ENCODE measurements at regions of chr7 and their contacts with region 1.

Region 1: GRCh38 chr7:7968543-7969305 is at the start of gene GLCCI1:
- DNase-seq: peak; percentile 93
- ATAC-seq: peak; percentile 89
- H3K4me3 Mint-ChIP-seq: peak within 1 kb of the TSS; percentile 92
- H3K27ac Mint-ChIP-seq: peak within 1 kb of the TSS; percentile 96
- H3K4me1 Mint-ChIP-seq: peaks cover 36% of the 10 kb centered on the region
- H3K27me3 Mint-ChIP-seq: no peaks in the 10 kb centered on the region
- CTCF ChIP-seq: no peak
- total RNA-seq, gene GLCCI1: 32.4 and 37.4 TPM in 2 replicates

Region 2: GRCh38 chr7:6729492-6730342 is 1239.0 kb before region 1 on chr7:
- CTCF ChIA-PET with region 1: no interaction called
- POLR2A ChIA-PET with region 1: no interaction called
- intact Hi-C with region 1: loop called (anchors 5 kb)
- DNase-seq: peak; percentile 75
- ATAC-seq: peak; percentile 88
- H3K4me3 Mint-ChIP-seq: peak overlapping the region; percentile 88
- H3K27ac Mint-ChIP-seq: peak overlapping the region; percentile 78
- H3K4me1 Mint-ChIP-seq: peaks cover 40% of the 10 kb centered on the region
- H3K27me3 Mint-ChIP-seq: no peaks in the 10 kb centered on the region
- CTCF ChIP-seq: no peak

Region 3: GRCh38 chr7:7566651-7567611 is 401.8 kb before region 1 on chr7 and contains the start of gene MIOS:
- CTCF ChIA-PET with region 1: no interaction called
- POLR2A ChIA-PET with region 1: interaction called, 3 read pairs
- intact Hi-C with region 1: loop called (anchors 1 kb)
- DNase-seq: peak; percentile 85
- ATAC-seq: peak; percentile 83
- H3K4me3 Mint-ChIP-seq: peak within 1 kb of the TSS; percentile 85
- H3K27ac Mint-ChIP-seq: peak within 1 kb of the TSS; percentile 90
- H3K4me1 Mint-ChIP-seq: peaks cover 35% of the 10 kb centered on the region
- H3K27me3 Mint-ChIP-seq: no peaks in the 10 kb centered on the region
- CTCF ChIP-seq: no peak
- total RNA-seq, gene MIOS: 70.2 and 81.3 TPM in 2 replicates

Region 4: GRCh38 chr7:7761340-7761980 is 207.3 kb before region 1 on chr7:
- CTCF ChIA-PET with region 1: no interaction called
- POLR2A ChIA-PET with region 1: interaction called, 6 read pairs
- intact Hi-C with region 1: loop called (anchors 1 kb)
- DNase-seq: no peak
- ATAC-seq: peak; percentile 60
- H3K4me3 Mint-ChIP-seq: peak overlapping the region; percentile 88
- H3K27ac Mint-ChIP-seq: peak overlapping the region; percentile 87
- H3K4me1 Mint-ChIP-seq: peaks cover 34% of the 10 kb centered on the region
- H3K27me3 Mint-ChIP-seq: no peaks in the 10 kb centered on the region
- CTCF ChIP-seq: no peak

Region 5: DNA sequence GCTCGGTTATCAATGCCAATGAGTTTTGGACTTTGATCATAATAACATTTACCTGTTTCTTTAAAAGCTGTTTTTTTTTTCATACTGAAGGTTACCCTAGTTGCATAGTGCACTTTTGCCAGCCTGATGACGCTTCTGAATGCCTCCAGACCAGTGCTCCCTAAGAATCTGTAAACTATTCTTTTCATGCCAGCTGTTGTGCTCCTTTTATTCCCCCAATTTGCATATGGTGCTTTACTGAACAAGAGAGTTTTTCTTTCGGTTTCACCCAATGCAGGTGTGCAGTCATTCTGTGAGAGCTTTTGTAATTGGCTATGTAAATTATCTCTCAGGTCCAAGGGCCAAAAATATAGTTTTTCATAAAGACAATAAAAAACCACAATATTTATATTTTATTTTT is 48.2 kb before region 1 on chr7:
- CTCF ChIA-PET with region 1: no interaction called
- POLR2A ChIA-PET with region 1: interaction called, 12 read pairs
- intact Hi-C with region 1: loop called (anchors 1 kb)
- DNase-seq: no peak
- ATAC-seq: peak; percentile 92
- H3K4me3 Mint-ChIP-seq: peak overlapping the region; percentile 69
- H3K27ac Mint-ChIP-seq: peak overlapping the region; percentile 91
- H3K4me1 Mint-ChIP-seq: peaks cover 62% of the 10 kb centered on the region
- H3K27me3 Mint-ChIP-seq: no peaks in the 10 kb centered on the region
- CTCF ChIP-seq: no peak

Region 6: DNA sequence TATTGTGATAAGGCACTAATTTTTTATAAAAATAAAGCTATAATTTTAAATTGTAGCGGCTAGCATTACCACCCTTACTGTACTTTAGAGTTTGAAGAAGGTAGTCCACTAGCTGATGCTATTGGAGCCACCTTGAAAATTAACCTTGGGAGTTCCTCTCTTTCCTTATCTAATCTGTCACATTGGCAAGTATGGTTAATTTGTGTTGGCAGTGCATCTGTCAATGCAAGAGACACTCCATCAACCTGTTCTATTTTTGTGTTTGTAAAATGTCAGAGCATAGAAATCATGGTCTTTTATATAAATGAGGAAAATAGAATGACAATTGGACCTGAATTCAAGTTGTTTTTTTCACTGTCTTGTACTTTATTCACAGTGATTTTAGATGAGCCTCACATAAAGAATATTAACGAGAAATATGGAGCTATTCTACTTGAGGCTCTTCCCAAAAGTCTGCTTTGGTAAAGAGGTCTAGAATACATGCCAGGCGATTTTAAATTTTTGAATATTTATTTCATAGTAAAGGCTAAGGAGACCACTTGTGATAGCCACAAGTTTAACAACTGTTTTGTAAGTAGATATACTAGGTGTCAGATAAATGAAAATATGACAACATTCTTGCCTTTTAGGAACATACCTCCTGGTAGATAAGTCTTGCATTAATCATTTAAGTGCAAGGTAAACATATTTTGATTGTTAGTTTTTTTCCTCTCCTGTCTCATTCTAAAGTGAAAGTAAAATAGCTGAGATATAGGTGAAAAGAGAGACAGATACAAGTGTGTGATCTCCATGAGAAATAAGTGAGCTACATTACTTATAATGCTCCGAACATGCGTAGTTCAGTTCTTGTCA is 20.6 kb after region 1 on chr7:
- CTCF ChIA-PET with region 1: no interaction called
- POLR2A ChIA-PET with region 1: interaction called, 4 read pairs
- intact Hi-C with region 1: loop called (anchors 2 kb)
- DNase-seq: no peak
- ATAC-seq: no peak
- H3K4me3 Mint-ChIP-seq: peak overlapping the region; percentile 33
- H3K27ac Mint-ChIP-seq: peak overlapping the region; percentile 36
- H3K4me1 Mint-ChIP-seq: peaks cover 50% of the 10 kb centered on the region
- H3K27me3 Mint-ChIP-seq: no peaks in the 10 kb centered on the region
- CTCF ChIP-seq: no peak

Region 7: GRCh38 chr7:8125680-8126444 is 157.1 kb after region 1 on chr7:
- CTCF ChIA-PET with region 1: no interaction called
- POLR2A ChIA-PET with region 1: interaction called, 14 read pairs
- intact Hi-C with region 1: no loop called
- DNase-seq: peak; percentile 40
- ATAC-seq: peak; percentile 92
- H3K4me3 Mint-ChIP-seq: peak overlapping the region; percentile 71
- H3K27ac Mint-ChIP-seq: peak overlapping the region; percentile 93
- H3K4me1 Mint-ChIP-seq: peaks cover 65% of the 10 kb centered on the region
- H3K27me3 Mint-ChIP-seq: no peaks in the 10 kb centered on the region
- CTCF ChIP-seq: no peak